ENCODE measurements at regions of chr16 and their contacts with region 1.

Region 1: GRCh38 chr16:10521681-10522274 is 58.6 kb downstream of the EMP2 start:
- DNase-seq: no peak
- ATAC-seq: peak; percentile 81

Region 2: GRCh38 chr16:10579965-10580882 is 58.4 kb after region 1 on chr16 and contains the start of gene EMP2:
- intact Hi-C with region 1: loop called (anchors 10 kb)
- DNase-seq: peak; percentile 90
- ATAC-seq: peak; percentile 85
- total RNA-seq, gene EMP2: 81.0 TPM

Region 3: GRCh38 chr16:10765772-10766171 is 244.0 kb after region 1 on chr16:
- intact Hi-C with region 1: no loop called
- DNase-seq: no peak
- ATAC-seq: peak; percentile 10